Activated T-helper 1 cell treated with anti-CD3 and anti-CD28 coated beads, Interleukin-12 subunit alpha, Interleukin-12 subunit beta, Interleukin-2, Interleukin-4 antibody, amounts not matched to agents 30 ng/mL and 10 ng/mL and 1 ng/mL, durations not matched to agents 14 hours and 24 hours and 36 hours (primary cell): ENCODE measurements at regions of chr3 and their contacts with region 1.

Region 1: GRCh38 chr3:31634481-31634880 is 101.8 kb downstream of the STT3B start:
- DNase-seq: no peak
- H3K4me3 Mint-ChIP-seq: no peak overlapping the region
- H3K27ac Mint-ChIP-seq: no peak overlapping the region
- H3K4me1 Mint-ChIP-seq: peaks cover 43% of the 10 kb centered on the region
- H3K27me3 Mint-ChIP-seq: no peaks in the 10 kb centered on the region

Region 2: GRCh38 chr3:31331306-31331705 is 303.2 kb before region 1 on chr3:
- intact Hi-C with region 1: no loop called
- DNase-seq: no peak
- H3K4me3 Mint-ChIP-seq: no peak overlapping the region
- H3K27ac Mint-ChIP-seq: no peak overlapping the region
- H3K4me1 Mint-ChIP-seq: no peaks in the 10 kb centered on the region
- H3K27me3 Mint-ChIP-seq: peaks cover 4% of the 10 kb centered on the region

Region 3: GRCh38 chr3:31550452-31551251 is 83.8 kb before region 1 on chr3:
- intact Hi-C with region 1: loop called (anchors 5 kb)
- DNase-seq: no peak
- H3K4me3 Mint-ChIP-seq: no peak overlapping the region
- H3K27ac Mint-ChIP-seq: no peak overlapping the region
- H3K4me1 Mint-ChIP-seq: peaks cover 75% of the 10 kb centered on the region
- H3K27me3 Mint-ChIP-seq: no peaks in the 10 kb centered on the region

Region 4: GRCh38 chr3:31596176-31596575 is 38.3 kb before region 1 on chr3:
- intact Hi-C with region 1: loop called (anchors 5 kb)
- DNase-seq: no peak
- H3K4me3 Mint-ChIP-seq: no peak overlapping the region
- H3K27ac Mint-ChIP-seq: peak overlapping the region; percentile 68
- H3K4me1 Mint-ChIP-seq: peaks cover 53% of the 10 kb centered on the region
- H3K27me3 Mint-ChIP-seq: no peaks in the 10 kb centered on the region

Region 5: GRCh38 chr3:31620656-31621055 is 13.8 kb before region 1 on chr3:
- intact Hi-C with region 1: loop called (anchors 2 kb)
- DNase-seq: no peak
- H3K4me3 Mint-ChIP-seq: no peak overlapping the region
- H3K27ac Mint-ChIP-seq: peak overlapping the region; percentile 27
- H3K4me1 Mint-ChIP-seq: peaks cover 40% of the 10 kb centered on the region
- H3K27me3 Mint-ChIP-seq: no peaks in the 10 kb centered on the region

Region 6: GRCh38 chr3:31704591-31705179 is 70.2 kb after region 1 on chr3:
- intact Hi-C with region 1: loop called (anchors 2 kb)
- DNase-seq: no peak
- H3K4me3 Mint-ChIP-seq: peak overlapping the region; percentile 3
- H3K27ac Mint-ChIP-seq: peak overlapping the region; percentile 47
- H3K4me1 Mint-ChIP-seq: peaks cover 14% of the 10 kb centered on the region
- H3K27me3 Mint-ChIP-seq: no peaks in the 10 kb centered on the region

Region 7: DNA sequence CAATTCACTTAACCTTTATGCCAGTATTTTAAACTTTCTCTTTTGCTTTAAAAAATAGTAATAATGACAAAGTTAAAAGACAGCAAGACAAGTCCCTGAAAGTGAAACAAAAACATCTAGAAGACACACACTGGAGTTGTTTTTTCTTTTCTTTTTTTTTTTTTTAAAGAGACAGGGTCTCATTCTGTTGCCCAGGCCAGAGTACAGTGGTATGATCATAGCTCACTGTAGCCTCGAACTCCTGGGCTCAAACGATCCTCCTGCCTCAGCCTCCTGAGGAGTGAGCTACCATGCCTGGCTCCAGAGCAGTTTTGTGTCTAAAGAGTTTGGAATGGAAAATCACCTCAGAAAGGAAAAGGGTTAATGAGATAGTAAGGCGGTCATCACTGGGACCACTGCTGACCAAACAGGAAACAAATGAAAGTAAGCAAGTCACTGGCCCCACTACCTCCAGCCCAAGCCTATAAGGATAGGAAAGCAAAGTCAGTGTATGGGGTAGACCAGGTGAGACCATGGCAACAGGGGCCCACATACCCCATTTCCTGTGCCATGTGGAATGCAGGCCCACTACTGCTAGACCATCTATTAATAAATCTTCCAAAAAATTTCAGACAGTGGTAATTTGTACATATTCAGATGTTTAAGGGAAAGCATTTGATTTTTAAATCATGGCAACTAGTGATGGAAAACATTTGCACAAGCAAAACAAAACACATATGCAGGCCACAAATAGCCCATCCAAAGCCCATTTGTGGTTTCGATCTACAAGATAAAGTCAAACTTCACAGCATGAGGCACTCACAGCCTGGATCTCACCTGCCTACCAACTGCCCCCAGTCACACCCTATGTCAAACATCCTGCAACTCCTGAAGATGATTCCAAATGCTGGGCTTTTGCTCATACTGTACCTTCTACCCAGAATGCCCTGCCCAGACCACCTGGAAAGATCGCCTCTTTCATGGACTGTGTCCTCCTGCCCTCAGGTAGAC is 284.0 kb after region 1 on chr3:
- intact Hi-C with region 1: loop called (anchors 10 kb)
- DNase-seq: peak; percentile 4
- H3K4me3 Mint-ChIP-seq: peak overlapping the region; percentile 68
- H3K27ac Mint-ChIP-seq: peak overlapping the region; percentile 85
- H3K4me1 Mint-ChIP-seq: peaks cover 37% of the 10 kb centered on the region
- H3K27me3 Mint-ChIP-seq: no peaks in the 10 kb centered on the region

Region 8: GRCh38 chr3:32117324-32117723 is 482.8 kb after region 1 on chr3:
- intact Hi-C with region 1: loop called (anchors 10 kb)
- DNase-seq: no peak
- H3K4me3 Mint-ChIP-seq: no peak overlapping the region
- H3K27ac Mint-ChIP-seq: no peak overlapping the region
- H3K4me1 Mint-ChIP-seq: peaks cover 34% of the 10 kb centered on the region
- H3K27me3 Mint-ChIP-seq: no peaks in the 10 kb centered on the region

Region 9: GRCh38 chr3:32467333-32468070 is 833.0 kb after region 1 on chr3:
- intact Hi-C with region 1: no loop called
- DNase-seq: peak; percentile 68
- H3K4me3 Mint-ChIP-seq: no peak overlapping the region
- H3K27ac Mint-ChIP-seq: no peak overlapping the region
- H3K4me1 Mint-ChIP-seq: peaks cover 54% of the 10 kb centered on the region
- H3K27me3 Mint-ChIP-seq: no peaks in the 10 kb centered on the region